ENCODE measurements at regions of chr10 and their contacts with region 1.

Region 1: GRCh38 chr10:84147347-84147746 is 8.0 kb downstream of the GHITM start:
- DNase-seq: no peak
- H3K4me3 ChIP-seq: no peak overlapping the region
- H3K27ac ChIP-seq: no peak overlapping the region
- H3K4me1 ChIP-seq: no peaks in the 10 kb centered on the region
- H3K27me3 ChIP-seq: no peaks in the 10 kb centered on the region
- CTCF ChIP-seq: no peak
- POLR2A ChIP-seq: no peak

Region 2: GRCh38 chr10:84205049-84205852 is 57.9 kb after region 1 on chr10:
- intact Hi-C with region 1: loop called (anchors 5 kb)
- DNase-seq: peak; percentile 59 to 65
- H3K4me3 ChIP-seq: no peak overlapping the region
- H3K27ac ChIP-seq: no peak overlapping the region
- H3K4me1 ChIP-seq: no peaks in the 10 kb centered on the region
- H3K27me3 ChIP-seq: no peaks in the 10 kb centered on the region
- CTCF ChIP-seq: peak in 5 of 6 experiments; percentile 53 to 78 (median 68)
- POLR2A ChIP-seq: no peak

Measured in thyroid gland (tissue), 4 donors.